Activated naive CD4-positive, alpha-beta T cell treated with anti-CD3 and anti-CD28 coated beads for 36 hours (primary cell): ENCODE measurements at regions of chr13 and their contacts with region 1.

Region 1: GRCh38 chr13:110715395-110716235 is 2.1 kb downstream of the ING1 start:
- DNase-seq: peak; percentile 98
- H3K4me3 Mint-ChIP-seq: peak overlapping the region; percentile 93
- H3K27ac Mint-ChIP-seq: peak overlapping the region; percentile 96
- H3K4me1 Mint-ChIP-seq: peaks cover 31% of the 10 kb centered on the region
- H3K27me3 Mint-ChIP-seq: no peaks in the 10 kb centered on the region

Region 2: GRCh38 chr13:110340812-110341444 is 374.7 kb before region 1 on chr13:
- CTCF ChIA-PET with region 1: no interaction called
- intact Hi-C with region 1: loop called (anchors 2 kb)
- DNase-seq: peak; percentile 93
- H3K4me3 Mint-ChIP-seq: peak overlapping the region; percentile 23
- H3K27ac Mint-ChIP-seq: peak overlapping the region; percentile 68
- H3K4me1 Mint-ChIP-seq: peaks cover 32% of the 10 kb centered on the region
- H3K27me3 Mint-ChIP-seq: peaks cover 14% of the 10 kb centered on the region

Region 3: GRCh38 chr13:110664041-110664440 is 51.6 kb before region 1 on chr13:
- CTCF ChIA-PET with region 1: no interaction called
- intact Hi-C with region 1: loop called (anchors 2 kb)
- DNase-seq: no peak
- H3K4me3 Mint-ChIP-seq: no peak overlapping the region
- H3K27ac Mint-ChIP-seq: no peak overlapping the region
- H3K4me1 Mint-ChIP-seq: peaks cover 16% of the 10 kb centered on the region
- H3K27me3 Mint-ChIP-seq: no peaks in the 10 kb centered on the region

Region 4: DNA sequence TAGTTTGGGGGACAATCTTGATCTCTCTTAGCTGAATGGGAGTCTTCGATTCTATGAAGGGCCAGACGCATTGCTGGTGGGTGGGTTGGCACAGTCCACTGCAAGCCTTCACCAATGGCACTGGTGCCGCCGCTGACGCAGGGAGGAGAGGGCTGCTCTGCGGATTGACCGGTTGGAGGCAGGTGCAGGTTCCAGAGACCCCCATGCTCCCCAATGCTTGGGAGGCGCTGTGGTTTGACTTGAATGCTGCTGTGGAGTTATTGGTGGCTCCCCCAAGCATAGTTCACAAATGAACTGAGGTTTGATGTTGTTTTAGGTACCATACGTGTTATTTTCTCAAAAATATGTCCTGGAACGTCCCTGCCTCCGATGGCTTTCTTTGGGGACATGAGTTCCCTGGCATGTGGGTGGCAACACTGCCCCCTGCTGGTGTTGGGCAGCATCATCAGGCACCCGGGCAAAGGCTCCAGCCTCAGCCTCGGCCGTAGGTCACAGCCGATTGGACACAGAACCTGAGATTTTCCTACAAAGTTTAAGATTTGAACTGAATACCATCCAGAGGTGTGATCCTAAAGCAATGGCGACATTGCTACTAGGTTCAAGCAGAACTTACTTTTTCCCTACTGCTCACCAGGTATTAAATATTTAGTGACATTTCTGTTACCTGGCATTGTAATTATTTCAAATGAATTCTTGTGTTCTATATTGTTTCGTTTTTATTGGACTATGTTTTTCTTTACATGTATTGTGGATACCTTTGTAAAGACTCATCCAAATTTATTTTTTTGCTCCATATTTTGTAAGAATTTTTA is 103.8 kb after region 1 on chr13:
- CTCF ChIA-PET with region 1: interaction called, 3 read pairs
- intact Hi-C with region 1: loop called (anchors 1 kb)
- DNase-seq: peak; percentile 88
- H3K4me3 Mint-ChIP-seq: no peak overlapping the region
- H3K27ac Mint-ChIP-seq: no peak overlapping the region
- H3K4me1 Mint-ChIP-seq: peaks cover 6% of the 10 kb centered on the region
- H3K27me3 Mint-ChIP-seq: no peaks in the 10 kb centered on the region

Region 5: DNA sequence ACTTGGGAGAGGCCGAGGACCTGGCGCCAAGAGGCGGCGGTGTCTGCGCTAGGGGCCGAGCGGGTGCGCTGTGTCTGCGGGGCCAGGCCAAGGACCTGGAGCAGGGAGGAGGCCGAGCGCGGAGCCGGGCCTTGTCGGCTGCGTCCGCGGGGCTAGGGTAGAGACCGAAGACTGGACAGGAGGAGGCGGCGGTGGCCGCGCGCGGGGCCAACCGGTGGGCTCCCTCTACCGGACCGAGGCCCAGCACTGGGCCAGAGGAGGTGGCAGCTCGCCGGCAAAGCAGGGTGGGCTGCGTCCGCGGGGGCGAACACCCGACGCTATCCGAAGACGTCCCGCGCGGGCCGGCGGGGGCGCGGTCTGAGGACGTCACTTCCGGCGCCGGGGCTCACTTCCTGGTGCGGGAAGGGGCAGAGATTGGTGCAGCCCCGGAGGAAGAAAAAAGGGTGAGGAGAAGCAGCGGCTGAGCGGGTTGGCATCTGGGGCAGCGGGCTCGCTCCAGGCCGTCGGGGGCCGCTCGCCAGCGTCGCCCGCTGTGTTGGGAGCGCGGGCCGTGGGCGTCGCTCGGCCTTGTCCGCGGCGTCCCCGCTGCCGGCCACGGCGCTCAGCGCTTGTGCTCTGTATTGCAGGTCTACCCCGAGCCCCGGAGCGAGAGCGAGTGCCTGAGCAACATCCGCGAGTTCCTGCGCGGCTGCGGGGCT is 437.8 kb after region 1 on chr13:
- CTCF ChIA-PET with region 1: no interaction called
- intact Hi-C with region 1: loop called (anchors 2 kb)
- DNase-seq: peak; percentile 93
- H3K4me3 Mint-ChIP-seq: peak overlapping the region; percentile 90
- H3K27ac Mint-ChIP-seq: peak overlapping the region; percentile 90
- H3K4me1 Mint-ChIP-seq: peaks cover 31% of the 10 kb centered on the region
- H3K27me3 Mint-ChIP-seq: no peaks in the 10 kb centered on the region